ENCODE measurements at regions of chr7 and their contacts with region 1.

Region 1: GRCh38 chr7:87231256-87231655 is 11.7 kb upstream of the TMEM243 start:
- DNase-seq: no peak
- ATAC-seq: no peak
- H3K4me3 Mint-ChIP-seq: no peak overlapping the region
- H3K27ac Mint-ChIP-seq: no peak overlapping the region
- H3K4me1 Mint-ChIP-seq: peaks cover 8% of the 10 kb centered on the region
- H3K27me3 Mint-ChIP-seq: no peaks in the 10 kb centered on the region
- CTCF ChIP-seq: no peak

Region 2: GRCh38 chr7:86926732-86927131 is 304.5 kb before region 1 on chr7:
- CTCF ChIA-PET with region 1: interaction called, 19 read pairs
- POLR2A ChIA-PET with region 1: no interaction called
- intact Hi-C with region 1: no loop called
- DNase-seq: no peak
- ATAC-seq: peak; percentile 52
- H3K4me3 Mint-ChIP-seq: no peak overlapping the region
- H3K27ac Mint-ChIP-seq: no peak overlapping the region
- H3K4me1 Mint-ChIP-seq: peaks cover 7% of the 10 kb centered on the region
- H3K27me3 Mint-ChIP-seq: no peaks in the 10 kb centered on the region
- CTCF ChIP-seq: peak; percentile 49

Region 3: GRCh38 chr7:86939197-86939814 is 291.9 kb before region 1 on chr7:
- CTCF ChIA-PET with region 1: interaction called, 14 read pairs
- POLR2A ChIA-PET with region 1: no interaction called
- intact Hi-C with region 1: no loop called
- DNase-seq: no peak
- ATAC-seq: peak; percentile 66
- H3K4me3 Mint-ChIP-seq: no peak overlapping the region
- H3K27ac Mint-ChIP-seq: no peak overlapping the region
- H3K4me1 Mint-ChIP-seq: no peaks in the 10 kb centered on the region
- H3K27me3 Mint-ChIP-seq: no peaks in the 10 kb centered on the region
- CTCF ChIP-seq: peak; percentile 35

Region 4: GRCh38 chr7:87067788-87068187 is 163.5 kb before region 1 on chr7:
- CTCF ChIA-PET with region 1: no interaction called
- POLR2A ChIA-PET with region 1: no interaction called
- intact Hi-C with region 1: no loop called
- DNase-seq: no peak
- ATAC-seq: no peak
- H3K4me3 Mint-ChIP-seq: no peak overlapping the region
- H3K27ac Mint-ChIP-seq: no peak overlapping the region
- H3K4me1 Mint-ChIP-seq: no peaks in the 10 kb centered on the region
- H3K27me3 Mint-ChIP-seq: peaks cover 16% of the 10 kb centered on the region
- CTCF ChIP-seq: no peak